ENCODE measurements at regions of chr20 and their contacts with region 1.

Region 1: DNA sequence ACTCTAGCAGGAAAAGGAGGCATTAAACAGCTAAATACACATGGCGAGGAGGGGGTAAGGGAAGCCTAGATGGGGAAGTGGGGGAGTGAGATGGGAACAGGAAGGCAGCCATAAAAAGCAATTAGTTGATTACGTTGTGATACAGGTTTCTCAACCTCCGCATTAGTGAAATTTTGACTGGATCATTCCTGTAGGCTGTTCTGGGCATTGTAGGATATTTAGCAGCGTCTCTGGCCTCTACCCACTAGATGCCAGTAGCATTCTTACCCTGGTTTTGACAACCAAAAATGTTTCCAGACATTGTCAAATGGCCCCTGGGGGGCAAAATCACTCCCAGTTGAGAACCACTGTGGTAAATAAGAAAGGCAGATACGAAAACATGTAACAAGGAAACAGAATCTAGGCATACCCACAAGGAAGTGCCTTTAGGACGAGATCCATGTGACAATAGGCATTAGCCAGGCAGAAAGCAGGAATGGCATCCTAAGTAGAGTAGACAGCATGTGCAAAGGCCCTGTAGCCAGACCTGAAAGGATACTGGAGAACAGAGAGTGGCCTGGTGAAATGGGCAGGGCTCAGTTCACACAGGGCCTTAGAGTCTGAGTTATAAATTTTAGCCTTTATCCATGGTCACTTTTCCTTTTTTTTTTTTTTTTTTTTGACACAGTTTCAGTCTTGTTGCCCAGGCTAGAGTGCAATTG is 25.8 kb upstream of the PTPN1 start:
- DNase-seq: no peak
- H3K4me3 Mint-ChIP-seq: peak overlapping the region; percentile 93
- H3K27ac Mint-ChIP-seq: peak overlapping the region; percentile 96
- H3K4me1 Mint-ChIP-seq: peaks cover 58% of the 10 kb centered on the region
- H3K27me3 Mint-ChIP-seq: no peaks in the 10 kb centered on the region

Region 2: GRCh38 chr20:50115591-50116372 is 368.6 kb before region 1 on chr20:
- intact Hi-C with region 1: loop called (anchors 10 kb)
- DNase-seq: peak; percentile 86
- H3K4me3 Mint-ChIP-seq: peak overlapping the region; percentile 85
- H3K27ac Mint-ChIP-seq: peak overlapping the region; percentile 95
- H3K4me1 Mint-ChIP-seq: peaks cover 43% of the 10 kb centered on the region
- H3K27me3 Mint-ChIP-seq: no peaks in the 10 kb centered on the region

Region 3: GRCh38 chr20:50509935-50510705 is 25.7 kb after region 1 on chr20 and contains the start of gene PTPN1:
- intact Hi-C with region 1: loop called (anchors 1 kb)
- DNase-seq: peak; percentile 99
- H3K4me3 Mint-ChIP-seq: peak within 1 kb of the TSS; percentile 93
- H3K27ac Mint-ChIP-seq: peak within 1 kb of the TSS; percentile 86
- H3K4me1 Mint-ChIP-seq: peaks cover 43% of the 10 kb centered on the region
- H3K27me3 Mint-ChIP-seq: no peaks in the 10 kb centered on the region
- total RNA-seq, gene PTPN1: 93.2 and 94.6 TPM in 2 replicates

Region 4: DNA sequence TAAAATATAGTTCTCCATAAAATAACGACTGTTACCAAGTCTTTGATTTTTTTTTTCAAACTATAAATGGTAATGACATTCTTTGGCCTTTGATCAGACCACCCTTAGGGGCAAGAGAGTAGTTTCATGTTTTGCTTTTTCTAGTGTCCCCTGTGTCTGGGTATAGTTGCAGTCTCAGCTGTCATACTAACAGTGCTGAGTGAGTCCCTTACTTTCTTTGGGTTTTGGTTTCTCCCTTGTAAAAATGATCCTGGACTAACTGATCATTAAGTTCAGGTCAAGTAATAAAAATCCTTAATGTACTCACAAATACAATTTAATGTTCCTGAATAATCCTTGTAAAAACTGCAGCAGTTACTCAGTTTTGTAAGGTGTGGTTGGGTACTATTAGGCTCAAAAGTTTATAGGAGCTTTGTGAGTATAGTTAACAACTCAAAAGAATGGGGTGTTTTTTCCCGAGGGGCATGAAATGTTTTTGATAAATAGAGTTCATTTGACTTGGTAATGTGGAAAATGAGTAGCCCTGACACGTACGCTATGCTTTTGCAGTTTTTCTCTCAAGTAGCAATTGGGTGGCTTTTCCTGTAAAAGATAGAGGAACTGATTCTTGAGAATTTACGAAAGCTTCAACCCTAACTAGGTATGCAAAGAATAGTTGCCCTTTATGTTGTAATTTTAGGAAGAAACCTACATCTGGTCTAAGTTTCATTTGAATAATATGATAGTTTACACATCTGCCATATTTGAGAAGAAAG is 31.9 kb after region 1 on chr20:
- intact Hi-C with region 1: loop called (anchors 1 kb)
- DNase-seq: no peak
- H3K4me3 Mint-ChIP-seq: peak overlapping the region; percentile 62
- H3K27ac Mint-ChIP-seq: peak overlapping the region; percentile 95
- H3K4me1 Mint-ChIP-seq: peaks cover 86% of the 10 kb centered on the region
- H3K27me3 Mint-ChIP-seq: no peaks in the 10 kb centered on the region

Region 5: GRCh38 chr20:50635667-50636503 is 151.5 kb after region 1 on chr20:
- intact Hi-C with region 1: no loop called
- DNase-seq: peak; percentile 36
- H3K4me3 Mint-ChIP-seq: no peak overlapping the region
- H3K27ac Mint-ChIP-seq: no peak overlapping the region
- H3K4me1 Mint-ChIP-seq: no peaks in the 10 kb centered on the region
- H3K27me3 Mint-ChIP-seq: peaks cover 2% of the 10 kb centered on the region

Region 6: GRCh38 chr20:50731055-50731871 is 246.8 kb after region 1 on chr20 and contains the start of gene PARD6B:
- intact Hi-C with region 1: loop called (anchors 10 kb)
- DNase-seq: peak; percentile 99
- H3K4me3 Mint-ChIP-seq: peak within 1 kb of the TSS; percentile 84
- H3K27ac Mint-ChIP-seq: peak within 1 kb of the TSS; percentile 78
- H3K4me1 Mint-ChIP-seq: peaks cover 30% of the 10 kb centered on the region
- H3K27me3 Mint-ChIP-seq: no peaks in the 10 kb centered on the region
- total RNA-seq, gene PARD6B: 4.7 and 5.7 TPM in 2 replicates